Endothelial cell of umbilical vein (primary cell): ENCODE measurements at regions of chr11 and their contacts with region 1.

Region 1: DNA sequence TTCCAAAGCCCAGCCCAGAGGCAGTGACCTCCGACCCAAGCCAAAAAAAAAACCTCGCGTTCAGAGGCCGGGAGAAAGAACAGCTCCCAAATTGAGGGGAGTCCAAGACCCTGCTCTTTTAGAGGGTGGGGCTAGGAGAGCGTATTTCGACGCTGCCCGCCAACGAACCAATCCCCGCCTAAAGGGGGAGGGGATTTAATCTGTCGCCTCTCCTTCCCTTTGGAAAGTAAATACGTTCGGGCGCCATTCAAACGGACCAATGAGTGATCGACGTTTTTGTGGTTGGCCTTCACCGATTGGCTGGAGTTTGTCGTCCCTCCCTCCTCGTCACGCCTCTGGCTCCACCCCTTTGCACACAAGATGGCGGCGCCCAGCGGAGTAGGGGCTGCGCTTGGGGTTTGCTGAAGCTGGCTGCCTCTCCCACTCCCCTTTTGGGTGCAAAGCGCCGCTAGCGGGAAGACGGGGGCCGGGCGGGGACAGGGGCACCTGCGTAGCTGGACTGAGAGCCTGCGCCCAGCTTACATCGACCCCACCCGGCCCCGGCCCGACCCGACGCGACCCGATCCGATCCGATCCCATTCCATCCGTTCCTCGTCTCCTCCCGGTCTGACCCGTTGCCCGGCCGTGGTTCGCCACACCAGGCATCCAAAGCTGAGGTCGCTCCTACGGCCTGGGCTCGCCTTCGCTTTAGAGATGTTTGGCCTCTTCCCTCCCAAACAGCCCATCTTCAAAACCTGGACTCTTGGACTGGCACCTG is at the start of gene RNF26:
- DNase-seq: peak; percentile 97
- H3K4me3 ChIP-seq: peak within 1 kb of the TSS; percentile 54 to 78 (median 77)
- H3K27ac ChIP-seq: peak within 1 kb of the TSS; percentile 34
- H3K4me1 ChIP-seq: peaks cover 34% of the 10 kb centered on the region
- H3K27me3 ChIP-seq: peaks cover 0 to 2% of the 10 kb centered on the region in 2 experiments
- CTCF ChIP-seq: no peak
- POLR2A ChIP-seq: peak; percentile 71
- total RNA-seq, gene RNF26: 37.9 and 40.1 TPM in 2 replicates

Region 2: GRCh38 chr11:118988280-118988679 is 346.1 kb before region 1 on chr11:
- CTCF ChIA-PET with region 1: no interaction called
- POLR2A ChIA-PET with region 1: no interaction called
- dilution Hi-C with region 1: no loop called
- intact Hi-C with region 1: no loop called
- DNase-seq: no peak
- H3K4me3 ChIP-seq: no peak overlapping the region
- H3K27ac ChIP-seq: no peak overlapping the region
- H3K4me1 ChIP-seq: no peaks in the 10 kb centered on the region
- H3K27me3 ChIP-seq: no peaks in the 10 kb centered on the region
- CTCF ChIP-seq: no peak
- POLR2A ChIP-seq: no peak

Region 3: GRCh38 chr11:119067371-119068222 is 266.8 kb before region 1 on chr11 and contains the start of gene VPS11:
- CTCF ChIA-PET with region 1: interaction called, 9 read pairs
- POLR2A ChIA-PET with region 1: no interaction called
- dilution Hi-C with region 1: no loop called
- intact Hi-C with region 1: loop called (anchors 2 kb)
- DNase-seq: peak; percentile 95
- H3K4me3 ChIP-seq: peak within 1 kb of the TSS; percentile 56 to 97 (median 64)
- H3K27ac ChIP-seq: peak within 1 kb of the TSS; percentile 45
- H3K4me1 ChIP-seq: peaks cover 3% of the 10 kb centered on the region
- H3K27me3 ChIP-seq: no peaks in the 10 kb centered on the region
- CTCF ChIP-seq: no peak
- POLR2A ChIP-seq: peak; percentile 91
- total RNA-seq, gene VPS11: 27.0 and 31.0 TPM in 2 replicates

Region 4: GRCh38 chr11:119121008-119121810 is 213.1 kb before region 1 on chr11 and contains the start of gene HINFP:
- CTCF ChIA-PET with region 1: interaction called, 10 read pairs
- POLR2A ChIA-PET with region 1: no interaction called
- dilution Hi-C with region 1: no loop called
- intact Hi-C with region 1: no loop called
- DNase-seq: peak; percentile 100
- H3K4me3 ChIP-seq: peak within 1 kb of the TSS; percentile 62 to 93 (median 85)
- H3K27ac ChIP-seq: peak within 1 kb of the TSS; percentile 4
- H3K4me1 ChIP-seq: peaks cover 11% of the 10 kb centered on the region
- H3K27me3 ChIP-seq: no peaks in the 10 kb centered on the region
- CTCF ChIP-seq: no peak
- POLR2A ChIP-seq: peak; percentile 97
- total RNA-seq, gene HINFP: 32.6 and 33.4 TPM in 2 replicates

Region 5: DNA sequence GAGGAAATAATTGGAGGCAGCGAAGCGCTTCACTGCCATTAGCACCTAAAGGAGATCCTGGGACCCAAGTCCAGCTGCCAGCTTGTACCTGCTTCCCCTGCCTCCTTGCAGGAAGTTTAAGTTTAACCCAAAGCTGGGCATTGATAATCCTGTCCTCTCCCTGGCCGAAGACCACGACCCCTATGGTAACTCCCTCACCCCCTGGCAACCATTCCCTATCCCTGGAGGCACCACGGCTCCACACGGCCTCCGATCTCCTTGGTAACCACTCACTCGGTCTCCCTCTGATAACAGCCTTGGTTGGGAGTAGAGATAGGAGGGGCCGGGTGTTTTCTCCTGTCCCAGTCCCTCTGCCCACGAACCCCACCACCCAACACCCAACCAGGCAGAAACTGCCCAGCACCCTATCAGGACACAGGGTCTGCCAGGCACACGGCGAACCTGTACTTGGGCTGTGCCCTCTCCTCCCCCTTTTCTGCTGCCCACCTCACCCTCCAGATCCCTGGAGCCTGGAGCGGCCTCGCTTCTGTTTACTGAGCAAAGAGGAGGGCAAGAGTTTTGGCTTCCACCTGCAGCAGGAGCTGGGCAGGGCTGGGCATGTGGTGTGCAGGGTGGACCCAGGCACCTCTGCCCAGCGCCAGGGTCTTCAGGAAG is 148.2 kb before region 1 on chr11:
- CTCF ChIA-PET with region 1: no interaction called
- POLR2A ChIA-PET with region 1: no interaction called
- dilution Hi-C with region 1: no loop called
- intact Hi-C with region 1: no loop called
- DNase-seq: no peak
- H3K4me3 ChIP-seq: no peak overlapping the region
- H3K27ac ChIP-seq: no peak overlapping the region
- H3K4me1 ChIP-seq: peaks cover 9% of the 10 kb centered on the region
- H3K27me3 ChIP-seq: peaks cover 0 to 2% of the 10 kb centered on the region in 2 experiments
- CTCF ChIP-seq: no peak
- POLR2A ChIP-seq: no peak

Region 6: GRCh38 chr11:119262668-119263351 is 71.5 kb before region 1 on chr11:
- CTCF ChIA-PET with region 1: interaction called, 8 read pairs
- POLR2A ChIA-PET with region 1: no interaction called
- dilution Hi-C with region 1: no loop called
- intact Hi-C with region 1: loop called (anchors 2 kb)
- DNase-seq: peak; percentile 71
- H3K4me3 ChIP-seq: no peak overlapping the region
- H3K27ac ChIP-seq: peak overlapping the region; percentile 73
- H3K4me1 ChIP-seq: peaks cover 24% of the 10 kb centered on the region
- H3K27me3 ChIP-seq: no peaks in the 10 kb centered on the region
- CTCF ChIP-seq: peak in 1 of 2 donors; percentile 4
- POLR2A ChIP-seq: no peak

Region 7: DNA sequence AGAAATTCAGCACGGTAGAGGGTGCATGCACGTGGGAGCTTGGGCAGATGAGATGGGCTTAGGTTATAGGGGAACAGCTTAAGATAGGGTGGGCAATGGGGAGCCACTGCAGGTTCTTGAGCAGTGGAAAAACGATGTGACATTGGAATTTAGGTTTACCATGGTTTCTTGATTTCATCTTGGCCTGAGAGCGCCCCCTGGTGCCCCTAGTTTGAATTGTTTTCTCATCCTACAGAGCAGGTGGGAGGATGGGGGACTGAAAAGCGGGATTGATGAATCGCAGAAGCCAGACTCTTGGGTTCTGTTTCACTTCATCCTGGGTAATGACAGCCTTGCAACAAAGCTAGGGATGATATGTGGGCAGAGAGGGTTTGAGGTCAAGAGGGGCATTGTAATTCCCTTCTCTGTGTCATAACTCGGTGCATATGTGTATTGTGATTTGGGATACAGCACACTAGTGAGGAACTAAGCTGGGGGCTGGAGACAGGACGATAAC is 10.8 kb before region 1 on chr11:
- CTCF ChIA-PET with region 1: interaction called, 301 read pairs
- POLR2A ChIA-PET with region 1: interaction called, 18 read pairs
- dilution Hi-C with region 1: no loop called
- intact Hi-C with region 1: loop called (anchors 1 kb)
- DNase-seq: peak; percentile 76
- H3K4me3 ChIP-seq: no peak overlapping the region
- H3K27ac ChIP-seq: no peak overlapping the region
- H3K4me1 ChIP-seq: peaks cover 39% of the 10 kb centered on the region
- H3K27me3 ChIP-seq: no peaks in the 10 kb centered on the region
- CTCF ChIP-seq: peak; percentile 80 to 86
- POLR2A ChIP-seq: no peak

Region 8: DNA sequence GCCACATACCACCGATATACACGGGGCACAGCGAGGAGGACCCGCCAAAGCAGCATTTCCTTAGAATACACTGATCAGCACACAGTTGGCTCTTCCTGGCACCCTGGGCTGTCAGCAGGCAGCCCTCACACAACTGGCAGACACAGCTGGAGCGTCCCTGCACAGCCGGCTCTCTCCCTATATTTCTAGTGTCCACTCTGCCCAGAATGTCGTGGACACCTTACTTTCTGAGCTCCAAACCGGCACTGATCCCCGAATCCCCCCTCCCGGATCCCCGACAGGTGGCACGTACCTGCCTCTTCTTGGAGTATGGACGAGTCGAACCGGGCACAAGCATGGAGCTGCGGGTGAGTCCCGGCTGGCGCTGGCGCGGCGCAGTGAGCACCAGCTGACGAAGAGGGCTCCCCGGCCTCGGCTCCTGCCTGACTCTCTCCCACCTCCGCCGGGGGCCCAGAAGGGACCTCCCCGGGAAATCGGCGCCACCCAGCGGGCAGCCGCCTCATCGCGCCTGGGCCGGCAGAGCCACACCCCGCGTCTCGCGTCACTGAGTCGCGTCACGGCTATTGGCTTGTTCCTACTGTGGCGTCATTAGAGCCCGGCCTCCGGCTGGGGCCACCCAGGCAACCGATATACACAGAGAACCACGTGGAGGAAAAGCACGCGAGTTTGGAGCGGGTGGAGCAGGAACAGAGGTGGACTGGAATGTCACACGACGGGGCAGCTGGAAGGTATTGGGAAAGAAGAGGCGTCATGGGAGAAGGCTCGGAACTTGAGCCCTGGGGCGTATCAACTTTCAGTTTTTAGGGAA is 47.0 kb after region 1 on chr11 and contains the start of gene USP2:
- CTCF ChIA-PET with region 1: interaction called, 134 read pairs
- POLR2A ChIA-PET with region 1: interaction called, 4 read pairs
- dilution Hi-C with region 1: no loop called
- intact Hi-C with region 1: no loop called
- DNase-seq: peak; percentile 95
- H3K4me3 ChIP-seq: peak within 1 kb of the TSS in 2 of 3 experiments; percentile 41 to 51
- H3K27ac ChIP-seq: no peak within 1 kb of the TSS
- H3K4me1 ChIP-seq: peaks cover 10% of the 10 kb centered on the region
- H3K27me3 ChIP-seq: peaks cover 7 to 14% of the 10 kb centered on the region in 2 experiments
- CTCF ChIP-seq: peak; percentile 92
- POLR2A ChIP-seq: no peak
- total RNA-seq, gene USP2: 1.1 and 1.2 TPM in 2 replicates